Activated CD4-positive, alpha-beta memory T cell treated with anti-CD3 and anti-CD28 coated beads for 36 hours (primary cell): ENCODE measurements at regions of chr17 and their contacts with region 1.

Region 1: DNA sequence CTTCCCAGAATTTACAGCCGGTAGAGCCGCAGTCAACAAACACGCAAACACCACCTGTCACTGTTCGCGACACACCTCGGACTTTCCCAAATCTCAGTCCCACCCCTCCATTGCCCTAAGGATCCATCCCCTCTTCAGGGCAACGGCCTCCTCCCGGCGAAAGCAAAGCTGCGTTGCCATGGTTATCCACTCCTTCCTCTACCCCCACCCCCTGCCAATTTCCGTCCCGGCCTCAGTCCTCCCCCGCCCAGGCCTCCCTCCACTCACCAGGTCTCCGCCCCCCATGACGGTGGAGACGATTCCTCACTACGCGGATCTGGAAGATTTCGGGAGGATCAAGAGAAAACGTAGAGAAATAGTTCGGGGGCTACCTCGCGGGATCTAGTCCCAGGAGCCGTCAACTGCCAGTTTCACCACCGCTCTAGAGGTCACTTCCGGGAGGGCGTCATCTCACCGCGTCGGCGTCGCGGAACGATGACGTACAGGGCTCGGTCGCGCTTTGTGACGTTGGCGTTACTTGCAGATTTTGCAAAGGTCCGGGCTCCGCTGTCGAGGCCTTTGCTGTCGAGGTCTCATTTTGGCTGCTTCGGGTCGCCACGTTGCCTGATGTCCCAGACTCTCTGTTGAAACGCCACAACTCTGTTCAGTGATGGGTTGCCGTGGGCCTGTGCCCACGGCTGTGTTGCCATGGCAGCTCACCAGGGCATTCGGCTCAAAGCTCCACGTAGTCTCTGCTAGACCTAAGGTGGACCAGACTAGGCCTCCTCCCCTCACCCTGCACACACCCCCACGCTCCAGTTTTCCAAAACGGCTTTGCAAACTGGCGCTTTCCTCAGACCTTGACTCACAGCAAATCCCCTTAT is at the start of gene CWC25:
- DNase-seq: peak; percentile 98
- H3K4me3 Mint-ChIP-seq: peak within 1 kb of the TSS; percentile 98
- H3K27ac Mint-ChIP-seq: peak within 1 kb of the TSS; percentile 99
- H3K4me1 Mint-ChIP-seq: peaks cover 26% of the 10 kb centered on the region
- H3K27me3 Mint-ChIP-seq: no peaks in the 10 kb centered on the region
- total RNA-seq, gene CWC25: 21.1 to 21.5 TPM

Region 2: GRCh38 chr17:38799378-38800236 is 25.5 kb before region 1 on chr17 and contains the start of gene PIP4K2B:
- CTCF ChIA-PET with region 1: no interaction called
- POLR2A ChIA-PET with region 1: no interaction called
- intact Hi-C with region 1: loop called (anchors 1 kb)
- DNase-seq: peak; percentile 94
- H3K4me3 Mint-ChIP-seq: peak within 1 kb of the TSS; percentile 80
- H3K27ac Mint-ChIP-seq: peak within 1 kb of the TSS; percentile 86
- H3K4me1 Mint-ChIP-seq: peaks cover 33% of the 10 kb centered on the region
- H3K27me3 Mint-ChIP-seq: no peaks in the 10 kb centered on the region
- total RNA-seq, gene PIP4K2B: 37.8 to 37.9 TPM

Region 3: GRCh38 chr17:38848557-38848891 is 23.4 kb after region 1 on chr17:
- CTCF ChIA-PET with region 1: interaction called, 6 read pairs
- POLR2A ChIA-PET with region 1: interaction called, 33 read pairs
- intact Hi-C with region 1: loop called (anchors 1 kb)
- DNase-seq: no peak
- H3K4me3 Mint-ChIP-seq: no peak overlapping the region
- H3K27ac Mint-ChIP-seq: no peak overlapping the region
- H3K4me1 Mint-ChIP-seq: peaks cover 30% of the 10 kb centered on the region
- H3K27me3 Mint-ChIP-seq: no peaks in the 10 kb centered on the region

Region 4: DNA sequence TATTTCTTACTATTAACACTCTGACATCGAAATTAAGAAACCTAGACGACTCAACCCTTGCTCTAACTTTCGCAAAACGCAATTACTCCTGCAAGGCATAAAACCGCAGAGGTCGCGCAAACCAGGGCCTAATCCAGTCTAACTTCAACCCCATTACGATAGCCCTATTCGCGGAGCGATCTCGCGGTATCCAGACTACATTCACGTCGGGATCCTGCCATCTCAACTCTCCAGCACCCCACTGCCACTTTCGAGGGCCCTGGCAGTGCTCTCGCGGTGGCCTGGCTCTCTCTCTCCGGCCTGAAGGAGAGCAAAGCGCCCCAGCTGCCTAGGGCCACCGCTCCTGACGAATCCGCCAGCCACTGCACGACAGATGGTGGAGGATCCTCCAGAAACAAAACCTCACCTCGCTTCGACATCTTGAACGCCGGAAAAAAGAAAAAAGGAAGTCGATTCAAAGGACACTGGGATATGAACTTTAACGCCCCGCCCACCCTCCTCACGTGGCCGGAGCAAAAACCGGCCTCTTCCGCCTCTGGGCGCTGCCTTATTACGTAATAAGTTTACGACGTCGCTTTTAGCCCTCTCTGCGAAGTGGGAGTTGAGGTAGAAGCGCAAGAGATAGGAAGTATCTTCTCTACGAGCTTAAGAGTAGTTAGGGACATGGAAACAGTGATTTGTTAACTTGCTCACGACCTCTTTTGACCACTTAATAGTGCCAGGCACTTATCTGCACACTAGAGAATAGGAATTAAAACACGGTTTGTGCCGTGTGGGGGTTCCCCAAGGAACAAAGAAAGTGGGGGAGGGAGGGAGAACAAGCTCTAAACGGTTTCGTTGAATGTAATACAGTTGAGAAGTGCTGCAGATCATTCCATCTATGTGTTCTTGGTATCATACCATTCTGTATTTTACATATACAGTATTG is 28.4 kb after region 1 on chr17 and contains the start of gene RPL23:
- CTCF ChIA-PET with region 1: interaction called, 6 read pairs
- POLR2A ChIA-PET with region 1: interaction called, 33 read pairs
- intact Hi-C with region 1: loop called (anchors 1 kb)
- DNase-seq: peak; percentile 95
- H3K4me3 Mint-ChIP-seq: peak within 1 kb of the TSS; percentile 99
- H3K27ac Mint-ChIP-seq: peak within 1 kb of the TSS; percentile 99
- H3K4me1 Mint-ChIP-seq: peaks cover 38% of the 10 kb centered on the region
- H3K27me3 Mint-ChIP-seq: no peaks in the 10 kb centered on the region
- total RNA-seq, gene RPL23: 1,774 to 1,791 TPM

Region 5: GRCh38 chr17:38885728-38886561 is 60.8 kb after region 1 on chr17:
- CTCF ChIA-PET with region 1: no interaction called
- POLR2A ChIA-PET with region 1: no interaction called
- intact Hi-C with region 1: no loop called
- DNase-seq: no peak
- H3K4me3 Mint-ChIP-seq: no peak overlapping the region
- H3K27ac Mint-ChIP-seq: peak overlapping the region; percentile 49
- H3K4me1 Mint-ChIP-seq: peaks cover 88% of the 10 kb centered on the region
- H3K27me3 Mint-ChIP-seq: no peaks in the 10 kb centered on the region